Activated naive CD4-positive, alpha-beta T cell treated with anti-CD3 and anti-CD28 coated beads for 36 hours (primary cell): ENCODE measurements at regions of chr3 and their contacts with region 1.

Region 1: DNA sequence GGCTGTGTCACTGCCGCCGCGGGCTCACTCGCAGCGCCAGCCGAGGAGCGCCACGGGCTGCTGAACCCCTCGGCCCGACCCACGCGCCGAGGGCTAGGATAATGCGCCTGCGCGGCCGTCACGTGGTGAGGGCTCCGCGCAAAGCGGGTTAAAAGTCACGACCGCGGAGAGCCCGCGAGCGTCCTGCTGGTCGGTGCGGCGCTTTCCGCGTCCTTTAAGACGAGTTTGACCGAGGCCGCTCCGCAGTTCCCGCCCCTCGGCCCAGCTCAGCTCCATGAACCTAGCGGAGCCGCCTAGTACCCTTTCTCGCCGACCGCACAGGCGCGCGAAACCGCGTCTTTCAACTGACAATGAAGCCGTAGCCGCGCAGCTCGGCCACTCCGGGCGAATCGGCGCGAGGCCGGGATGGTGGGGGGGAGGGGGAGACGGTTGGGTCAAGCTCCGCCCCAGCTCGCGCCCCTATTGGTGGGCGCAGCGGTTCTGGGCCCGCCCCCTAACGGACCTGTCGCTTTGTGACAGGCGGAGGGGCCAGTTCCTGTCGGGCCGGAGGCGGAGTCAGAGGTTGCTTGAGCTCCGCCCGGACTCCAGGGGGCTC is 636 bp upstream of the STT3B start:
- DNase-seq: peak; percentile 99
- H3K4me3 Mint-ChIP-seq: peak overlapping the region; percentile 95
- H3K27ac Mint-ChIP-seq: peak overlapping the region; percentile 99
- H3K4me1 Mint-ChIP-seq: peaks cover 13% of the 10 kb centered on the region
- H3K27me3 Mint-ChIP-seq: no peaks in the 10 kb centered on the region

Region 2: DNA sequence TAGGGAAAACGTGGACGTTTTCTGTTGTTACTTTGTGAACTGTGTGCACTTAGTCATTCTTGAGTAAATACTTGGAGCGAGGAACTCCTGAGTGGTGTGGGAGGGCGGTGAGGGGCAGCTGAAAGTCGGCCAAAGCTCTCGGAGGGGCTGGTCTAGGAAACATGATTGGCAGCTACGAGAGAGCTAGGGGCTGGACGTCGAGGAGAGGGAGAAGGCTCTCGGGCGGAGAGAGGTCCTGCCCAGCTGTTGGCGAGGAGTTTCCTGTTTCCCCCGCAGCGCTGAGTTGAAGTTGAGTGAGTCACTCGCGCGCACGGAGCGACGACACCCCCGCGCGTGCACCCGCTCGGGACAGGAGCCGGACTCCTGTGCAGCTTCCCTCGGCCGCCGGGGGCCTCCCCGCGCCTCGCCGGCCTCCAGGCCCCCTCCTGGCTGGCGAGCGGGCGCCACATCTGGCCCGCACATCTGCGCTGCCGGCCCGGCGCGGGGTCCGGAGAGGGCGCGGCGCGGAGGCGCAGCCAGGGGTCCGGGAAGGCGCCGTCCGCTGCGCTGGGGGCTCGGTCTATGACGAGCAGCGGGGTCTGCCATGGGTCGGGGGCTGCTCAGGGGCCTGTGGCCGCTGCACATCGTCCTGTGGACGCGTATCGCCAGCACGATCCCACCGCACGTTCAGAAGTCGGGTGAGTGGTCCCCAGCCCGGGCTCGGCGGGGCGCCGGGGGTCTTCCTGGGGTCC is 925.6 kb before region 1 on chr3 and contains the start of gene TGFBR2:
- CTCF ChIA-PET with region 1: no interaction called
- intact Hi-C with region 1: loop called (anchors 5 kb)
- DNase-seq: peak; percentile 90
- H3K4me3 Mint-ChIP-seq: peak within 1 kb of the TSS; percentile 94
- H3K27ac Mint-ChIP-seq: peak within 1 kb of the TSS; percentile 100
- H3K4me1 Mint-ChIP-seq: peaks cover 52% of the 10 kb centered on the region
- H3K27me3 Mint-ChIP-seq: no peaks in the 10 kb centered on the region
- total RNA-seq, gene TGFBR2: 57.8 to 58.1 TPM

Region 3: GRCh38 chr3:30904986-30905657 is 627.0 kb before region 1 on chr3:
- CTCF ChIA-PET with region 1: no interaction called
- intact Hi-C with region 1: no loop called
- DNase-seq: no peak
- H3K4me3 Mint-ChIP-seq: no peak overlapping the region
- H3K27ac Mint-ChIP-seq: no peak overlapping the region
- H3K4me1 Mint-ChIP-seq: no peaks in the 10 kb centered on the region
- H3K27me3 Mint-ChIP-seq: no peaks in the 10 kb centered on the region

Region 4: GRCh38 chr3:31077021-31077601 is 455.0 kb before region 1 on chr3:
- CTCF ChIA-PET with region 1: no interaction called
- intact Hi-C with region 1: loop called (anchors 5 kb)
- DNase-seq: peak; percentile 72
- H3K4me3 Mint-ChIP-seq: no peak overlapping the region
- H3K27ac Mint-ChIP-seq: peak overlapping the region; percentile 4
- H3K4me1 Mint-ChIP-seq: peaks cover 18% of the 10 kb centered on the region
- H3K27me3 Mint-ChIP-seq: no peaks in the 10 kb centered on the region

Region 5: DNA sequence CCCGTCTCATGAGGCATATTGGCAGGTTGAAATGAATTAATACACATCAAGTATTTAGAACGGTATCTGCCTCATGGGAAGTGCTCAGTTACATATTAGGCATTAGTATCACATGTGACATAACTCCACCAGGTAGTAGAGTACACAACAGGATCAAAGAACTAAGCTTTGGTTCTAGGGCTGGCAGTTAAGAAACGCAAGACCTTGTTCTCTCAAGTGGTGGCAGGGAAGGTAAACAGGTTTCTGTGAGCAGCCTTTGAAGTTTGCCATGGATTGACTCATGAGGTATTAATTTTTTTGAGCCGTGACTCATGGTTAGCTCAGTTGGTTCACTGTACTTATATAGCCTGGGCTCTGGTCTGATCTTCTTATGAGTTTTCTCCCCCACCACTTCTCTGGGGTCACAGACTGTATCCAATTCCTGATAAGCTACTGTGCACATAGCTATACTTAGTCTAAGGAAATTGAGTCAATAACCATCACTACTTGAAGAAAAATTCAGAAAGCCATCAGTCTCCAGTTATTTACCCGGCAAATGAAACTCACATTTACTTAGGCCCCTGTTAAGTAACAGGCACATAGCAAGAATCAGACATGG is 154.9 kb before region 1 on chr3:
- CTCF ChIA-PET with region 1: no interaction called
- intact Hi-C with region 1: loop called (anchors 2 kb)
- DNase-seq: peak; percentile 56
- H3K4me3 Mint-ChIP-seq: no peak overlapping the region
- H3K27ac Mint-ChIP-seq: peak overlapping the region; percentile 25
- H3K4me1 Mint-ChIP-seq: peaks cover 13% of the 10 kb centered on the region
- H3K27me3 Mint-ChIP-seq: no peaks in the 10 kb centered on the region

Region 6: DNA sequence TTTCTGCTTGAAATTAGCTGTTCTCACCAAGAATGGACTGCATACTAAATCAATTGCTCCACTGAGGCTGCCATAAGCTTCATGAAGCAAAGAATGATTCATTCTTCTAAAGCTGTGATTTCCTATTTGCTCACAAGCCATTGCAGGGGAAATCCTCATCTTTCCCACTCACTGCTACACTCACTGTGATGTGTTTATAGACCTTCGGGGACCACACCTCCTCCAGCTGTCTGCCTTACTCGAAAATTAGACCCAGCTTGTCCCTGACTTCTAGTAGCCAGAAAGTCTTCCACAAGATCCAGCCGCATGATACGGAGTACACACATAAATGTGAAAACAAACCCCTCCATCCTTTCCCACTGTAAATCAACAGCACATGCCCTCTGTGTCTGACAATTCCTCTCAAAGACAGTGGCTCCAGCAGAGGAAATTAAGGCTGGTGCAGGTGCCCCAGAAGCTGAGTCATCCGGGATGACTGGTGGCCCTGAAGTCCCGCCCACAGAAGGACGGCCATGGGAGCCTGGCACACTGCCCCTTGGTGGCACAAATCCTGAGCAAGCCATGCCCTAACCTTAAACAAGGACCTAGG is 172.6 kb after region 1 on chr3:
- CTCF ChIA-PET with region 1: no interaction called
- intact Hi-C with region 1: loop called (anchors 1 kb)
- DNase-seq: peak; percentile 74
- H3K4me3 Mint-ChIP-seq: peak overlapping the region; percentile 55
- H3K27ac Mint-ChIP-seq: peak overlapping the region; percentile 85
- H3K4me1 Mint-ChIP-seq: peaks cover 13% of the 10 kb centered on the region
- H3K27me3 Mint-ChIP-seq: peaks cover 7% of the 10 kb centered on the region

Region 7: GRCh38 chr3:32420126-32421038 is 888.3 kb after region 1 on chr3:
- CTCF ChIA-PET with region 1: no interaction called
- intact Hi-C with region 1: loop called (anchors 10 kb)
- DNase-seq: peak; percentile 81
- H3K4me3 Mint-ChIP-seq: peak overlapping the region; percentile 66
- H3K27ac Mint-ChIP-seq: peak overlapping the region; percentile 94
- H3K4me1 Mint-ChIP-seq: peaks cover 92% of the 10 kb centered on the region
- H3K27me3 Mint-ChIP-seq: no peaks in the 10 kb centered on the region